ENCODE measurements at regions of chr5 and their contacts with region 1.

Region 1: GRCh38 chr5:29367176-29367833 is 1826.2 kb upstream of the CDH6 start:
- DNase-seq: no peak

Region 2: DNA sequence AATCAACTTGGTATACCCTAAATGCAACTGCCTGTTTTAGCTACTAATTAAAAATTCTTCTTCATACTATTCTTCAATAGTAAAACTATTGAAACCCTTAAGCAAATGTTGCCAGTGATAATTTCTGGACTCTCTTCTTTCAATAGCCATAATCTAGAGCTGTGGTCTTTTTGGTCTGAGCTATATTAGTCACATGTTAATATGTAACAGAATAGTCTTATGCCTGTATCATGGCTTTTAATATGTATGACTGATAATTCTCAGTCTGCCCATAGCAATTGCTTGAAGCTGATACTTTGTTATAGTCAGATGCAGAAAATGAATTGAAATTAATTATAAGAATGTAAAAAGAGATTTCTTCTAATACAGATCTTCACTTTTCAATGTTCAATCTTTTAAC is 45.7 kb before region 1 on chr5:
- CTCF ChIA-PET with region 1: no interaction called
- POLR2A ChIA-PET with region 1: no interaction called
- DNase-seq: no peak

Region 3: DNA sequence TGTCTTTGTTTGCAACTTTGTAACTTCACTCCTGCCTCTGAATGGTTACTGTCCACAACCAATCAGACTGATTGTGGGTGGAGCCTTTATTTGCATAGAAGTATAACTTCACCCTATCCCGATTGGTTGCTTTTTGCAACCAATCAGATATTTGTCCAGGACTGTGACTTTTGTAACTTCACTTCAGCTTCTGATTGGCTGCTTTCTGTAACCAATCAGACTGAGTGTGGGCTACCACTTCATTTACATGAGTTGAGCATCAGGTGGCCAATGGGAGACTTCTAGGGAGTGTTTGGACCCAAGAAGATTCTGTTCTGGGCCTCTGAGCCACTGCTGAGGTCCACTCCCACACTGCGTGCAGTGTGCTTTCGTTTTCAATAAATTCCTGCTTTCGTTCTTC is 15.5 kb after region 1 on chr5:
- CTCF ChIA-PET with region 1: no interaction called
- POLR2A ChIA-PET with region 1: no interaction called
- DNase-seq: no peak

Region 4: DNA sequence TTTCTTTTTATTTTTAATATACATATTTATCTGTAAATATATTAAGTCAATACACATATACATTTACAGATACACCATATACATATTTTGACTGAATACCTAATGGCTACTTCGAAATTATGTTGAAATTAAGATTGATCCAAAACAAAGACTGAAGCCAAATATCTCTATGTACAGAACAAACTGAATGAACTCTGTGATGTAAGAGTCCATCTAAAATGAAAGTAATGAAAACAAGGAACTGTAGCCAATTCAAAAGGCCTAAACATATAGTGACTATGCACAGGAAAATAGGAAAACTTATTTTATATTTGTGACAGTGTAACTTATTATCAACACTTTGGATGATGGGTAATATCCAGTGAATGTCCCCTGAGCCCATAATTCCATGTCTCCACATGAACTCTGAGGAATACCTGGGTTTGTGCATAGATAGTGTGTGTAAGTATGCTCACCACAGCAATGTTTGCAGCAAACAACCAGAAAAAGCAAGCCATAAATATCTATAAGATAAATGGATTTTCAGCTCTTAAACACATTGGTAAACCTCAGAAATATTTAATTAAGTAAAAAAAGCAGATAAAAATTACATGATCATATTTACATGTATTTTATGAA is 1309.0 kb after region 1 on chr5:
- CTCF ChIA-PET with region 1: interaction called, 11 read pairs
- POLR2A ChIA-PET with region 1: no interaction called
- DNase-seq: no peak

Measured in HEK293T (cell line).